ENCODE measurements at regions of chr7 and their contacts with region 1.

Region 1: DNA sequence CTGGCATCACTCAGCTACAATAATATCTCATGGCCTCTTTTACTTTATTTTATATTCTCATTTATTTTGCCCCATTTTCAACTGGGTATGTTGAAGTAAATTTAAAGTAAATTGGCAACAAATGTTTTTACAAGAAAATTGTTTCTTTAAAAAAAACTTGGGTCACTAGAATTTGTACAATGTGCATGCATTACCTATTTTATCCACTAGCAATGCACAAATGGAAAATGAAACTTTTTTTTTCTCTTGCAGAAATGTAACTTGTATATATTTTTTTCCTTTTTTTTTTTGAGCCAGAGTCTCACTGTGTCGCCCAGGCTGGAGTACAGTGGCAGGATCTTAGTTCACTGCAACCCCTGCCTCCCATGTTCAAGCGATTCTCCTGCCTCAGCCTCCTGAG is 10.3 kb upstream of the H2AZ2 start:
- DNase-seq: no peak
- H3K4me3 Mint-ChIP-seq: no peak overlapping the region
- H3K27ac Mint-ChIP-seq: no peak overlapping the region
- H3K4me1 Mint-ChIP-seq: peaks cover 17% of the 10 kb centered on the region
- H3K27me3 Mint-ChIP-seq: peaks cover 2% of the 10 kb centered on the region

Region 2: GRCh38 chr7:44914992-44915607 is 56.9 kb after region 1 on chr7:
- intact Hi-C with region 1: loop called (anchors 1 kb)
- DNase-seq: peak; percentile 78
- H3K4me3 Mint-ChIP-seq: peak overlapping the region; percentile 67
- H3K27ac Mint-ChIP-seq: peak overlapping the region; percentile 85
- H3K4me1 Mint-ChIP-seq: peaks cover 16% of the 10 kb centered on the region
- H3K27me3 Mint-ChIP-seq: peaks cover 2% of the 10 kb centered on the region

Region 3: GRCh38 chr7:44921607-44922359 is 63.6 kb after region 1 on chr7:
- intact Hi-C with region 1: loop called (anchors 1 kb)
- DNase-seq: peak; percentile 86
- H3K4me3 Mint-ChIP-seq: no peak overlapping the region
- H3K27ac Mint-ChIP-seq: peak overlapping the region; percentile 79
- H3K4me1 Mint-ChIP-seq: peaks cover 15% of the 10 kb centered on the region
- H3K27me3 Mint-ChIP-seq: peaks cover 7% of the 10 kb centered on the region